HCT116 (cell line): ENCODE measurements at regions of chr22 and their contacts with region 1.

Region 1: DNA sequence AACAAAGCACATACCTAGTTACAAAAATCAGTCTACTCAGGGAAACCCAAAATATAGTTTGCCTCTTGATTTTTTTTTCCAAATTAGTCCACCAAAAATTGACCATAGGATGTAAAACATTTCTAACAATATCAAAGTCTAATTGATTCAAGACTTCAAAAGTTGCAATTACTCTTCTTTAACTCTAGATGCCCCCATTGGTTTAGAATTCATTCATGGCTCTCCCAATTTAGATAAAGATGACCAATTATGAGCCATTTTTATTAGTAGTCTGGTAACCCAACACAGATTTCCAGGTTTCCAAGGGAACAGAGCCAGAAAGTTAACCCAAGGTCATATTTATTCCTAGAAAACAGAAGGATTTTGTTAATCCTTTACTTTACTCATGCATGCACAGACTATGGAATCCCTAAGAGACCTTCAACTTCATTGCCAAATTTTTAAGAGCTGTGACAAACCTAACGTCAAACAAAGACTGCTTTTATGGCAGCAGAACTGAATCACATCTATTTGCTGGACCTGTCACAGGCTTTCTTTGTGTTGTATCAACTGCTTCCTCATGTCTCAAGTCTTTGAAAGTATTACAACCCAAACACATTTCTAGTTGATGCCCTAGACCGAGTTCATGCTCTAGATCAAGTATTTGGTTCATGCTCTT is 55.3 kb downstream of the C22orf42 start:
- DNase-seq: peak; percentile 15
- ATAC-seq: no peak
- H3K4me3 ChIP-seq: no peak overlapping the region
- H3K27ac ChIP-seq: no peak overlapping the region
- H3K4me1 ChIP-seq: no peaks in the 10 kb centered on the region
- H3K27me3 ChIP-seq: peaks cover 40% of the 10 kb centered on the region
- CTCF ChIP-seq: peak; percentile 5 to 56 (median 54); a peak in 4 of 6 replicates
- POLR2A ChIP-seq: no peak
- RAD21 ChIP-seq: peak; percentile 65

Region 2: GRCh38 chr22:32265882-32266767 is 162.3 kb after region 1 on chr22:
- CTCF ChIA-PET with region 1: interaction called, 10 read pairs
- POLR2A ChIA-PET with region 1: no interaction called
- RAD21 ChIA-PET with region 1: interaction called in 1 of 2 experiments, 3 read pairs
- intact Hi-C with region 1: loop called (anchors 2 kb)
- DNase-seq: peak; percentile 44
- ATAC-seq: peak; percentile 85
- H3K4me3 ChIP-seq: no peak overlapping the region
- H3K27ac ChIP-seq: peak overlapping the region; percentile 13; the same call in 1 of the 2 replicates
- H3K4me1 ChIP-seq: peaks cover 3 to 5% of the 10 kb centered on the region in 2 experiments; a peak in 2 of 4 replicates
- H3K27me3 ChIP-seq: no peaks in the 10 kb centered on the region
- CTCF ChIP-seq: peak; percentile 58 to 87 (median 84)
- POLR2A ChIP-seq: no peak
- RAD21 ChIP-seq: peak; percentile 50

Region 3: GRCh38 chr22:32331236-32331917 is 227.6 kb after region 1 on chr22:
- CTCF ChIA-PET with region 1: no interaction called
- POLR2A ChIA-PET with region 1: no interaction called
- RAD21 ChIA-PET with region 1: no interaction called
- intact Hi-C with region 1: no loop called
- DNase-seq: no peak
- ATAC-seq: no peak
- H3K4me3 ChIP-seq: no peak overlapping the region
- H3K27ac ChIP-seq: no peak overlapping the region
- H3K4me1 ChIP-seq: no peaks in the 10 kb centered on the region
- H3K27me3 ChIP-seq: no peaks in the 10 kb centered on the region
- CTCF ChIP-seq: no peak
- POLR2A ChIP-seq: no peak
- RAD21 ChIP-seq: no peak

Region 4: DNA sequence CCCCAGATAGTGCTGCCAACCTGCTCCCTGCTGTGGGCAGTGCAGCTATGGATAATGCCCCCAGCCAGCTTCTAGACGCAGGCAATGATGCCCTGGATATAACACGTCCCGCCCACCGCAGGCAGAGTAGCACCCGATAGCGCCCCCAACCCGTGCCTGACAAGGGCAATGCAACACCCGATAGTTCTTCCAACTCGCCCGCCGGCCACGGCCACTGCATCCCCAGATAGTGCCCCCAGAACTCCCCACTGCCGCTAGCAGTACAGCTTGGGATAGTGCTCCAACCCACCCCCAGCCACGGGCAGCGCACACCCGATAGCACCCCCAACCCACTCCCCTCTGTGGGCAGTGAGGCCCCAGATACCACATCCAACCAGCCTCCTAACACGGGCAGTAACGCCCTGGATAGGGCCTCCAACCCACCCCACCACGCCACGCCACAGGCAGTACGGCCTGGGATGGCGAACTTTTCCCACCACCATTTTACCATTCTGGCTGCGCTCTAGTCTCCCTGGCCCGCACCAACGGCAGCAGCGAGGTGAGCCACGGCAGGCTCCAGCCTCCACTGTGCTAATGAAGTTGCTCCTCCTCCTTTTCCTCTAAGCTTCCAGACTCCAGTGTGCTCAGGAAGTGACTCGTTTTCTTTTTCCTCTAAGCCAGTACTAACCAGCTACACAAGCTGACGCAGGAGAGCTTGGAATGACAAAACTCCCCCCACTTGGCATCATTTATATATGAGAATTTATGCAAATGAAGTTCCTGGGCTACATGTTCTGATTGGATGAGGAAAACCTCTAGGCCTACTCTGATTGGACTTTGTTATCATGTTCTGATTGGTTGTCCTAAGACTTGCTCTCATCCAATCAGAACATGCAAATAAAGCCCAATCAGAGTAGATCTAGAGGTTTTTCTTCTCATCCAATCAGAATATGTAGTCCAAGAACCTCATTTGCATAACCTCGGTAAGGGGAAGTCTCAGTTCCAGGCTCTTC is 250.9 kb after region 1 on chr22:
- CTCF ChIA-PET with region 1: no interaction called
- POLR2A ChIA-PET with region 1: no interaction called
- RAD21 ChIA-PET with region 1: no interaction called
- intact Hi-C with region 1: loop called (anchors 2 kb)
- DNase-seq: peak; percentile 49
- ATAC-seq: peak; percentile 46
- H3K4me3 ChIP-seq: peak overlapping the region; percentile 8 to 9; a peak in 1 of 4 replicates
- H3K27ac ChIP-seq: no peak overlapping the region
- H3K4me1 ChIP-seq: peaks cover 0 to 6% of the 10 kb centered on the region in 2 experiments; a peak in 1 of 4 replicates
- H3K27me3 ChIP-seq: no peaks in the 10 kb centered on the region
- CTCF ChIP-seq: no peak
- POLR2A ChIP-seq: no peak
- RAD21 ChIP-seq: no peak

Region 5: GRCh38 chr22:32378707-32379272 is 275.0 kb after region 1 on chr22:
- CTCF ChIA-PET with region 1: interaction called, 3 read pairs
- POLR2A ChIA-PET with region 1: no interaction called
- RAD21 ChIA-PET with region 1: no interaction called
- intact Hi-C with region 1: loop called (anchors 1 kb)
- DNase-seq: peak; percentile 54
- ATAC-seq: peak; percentile 99
- H3K4me3 ChIP-seq: no peak overlapping the region
- H3K27ac ChIP-seq: no peak overlapping the region
- H3K4me1 ChIP-seq: no peaks in the 10 kb centered on the region; a peak in 1 of 4 replicates
- H3K27me3 ChIP-seq: no peaks in the 10 kb centered on the region
- CTCF ChIP-seq: peak; percentile 98
- POLR2A ChIP-seq: no peak
- RAD21 ChIP-seq: peak; percentile 80

Region 6: GRCh38 chr22:32444068-32444467 is 340.3 kb after region 1 on chr22:
- CTCF ChIA-PET with region 1: no interaction called
- POLR2A ChIA-PET with region 1: no interaction called
- RAD21 ChIA-PET with region 1: no interaction called
- intact Hi-C with region 1: loop called (anchors 5 kb)
- DNase-seq: peak; percentile 34
- ATAC-seq: peak; percentile 98
- H3K4me3 ChIP-seq: no peak overlapping the region
- H3K27ac ChIP-seq: no peak overlapping the region
- H3K4me1 ChIP-seq: no peaks in the 10 kb centered on the region
- H3K27me3 ChIP-seq: no peaks in the 10 kb centered on the region; the same call in 1 of the 2 replicates
- CTCF ChIP-seq: peak; percentile 57 to 67 (median 62); a peak in 5 of 6 replicates
- POLR2A ChIP-seq: no peak
- RAD21 ChIP-seq: peak; percentile 67

Region 7: DNA sequence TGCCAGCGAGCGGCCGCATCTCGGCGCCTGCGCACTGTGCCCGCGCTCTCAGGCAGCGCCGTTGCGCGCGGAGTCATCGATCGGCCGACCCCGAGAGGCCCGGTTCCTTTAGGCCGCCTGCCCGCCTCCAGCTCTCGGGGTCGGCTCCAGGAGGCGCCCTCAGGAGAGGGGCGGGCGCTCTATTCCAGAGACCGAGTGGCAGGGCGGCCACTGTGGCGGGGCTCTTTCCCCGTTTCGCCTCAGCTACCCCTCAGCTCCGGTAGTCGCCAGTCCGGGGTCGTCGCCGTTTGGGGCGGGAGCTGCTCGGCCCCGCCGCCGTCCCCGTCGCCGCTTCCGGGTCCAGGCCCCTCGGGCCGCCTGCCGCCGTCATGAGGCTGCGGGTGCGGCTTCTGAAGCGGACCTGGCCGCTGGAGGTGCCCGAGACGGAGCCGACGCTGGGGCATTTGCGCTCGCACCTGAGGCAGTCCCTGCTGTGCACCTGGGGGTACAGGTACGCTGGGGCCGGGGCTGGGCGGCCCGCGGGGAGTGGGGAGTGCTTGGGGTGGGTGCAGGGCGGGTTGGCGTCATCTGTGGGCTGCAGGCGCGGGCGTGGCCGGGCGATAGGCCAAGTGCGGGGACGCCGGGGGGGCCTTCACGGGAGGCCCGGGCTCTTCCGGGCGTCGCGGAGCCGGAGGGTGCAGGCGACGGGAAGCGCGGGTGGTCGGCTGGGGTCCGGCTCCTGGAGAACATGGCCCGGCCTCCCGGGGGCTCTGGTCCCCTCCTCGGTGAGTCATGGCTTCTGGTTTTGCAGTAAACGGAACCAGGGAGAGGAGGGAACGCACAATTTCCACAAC is 371.1 kb after region 1 on chr22 and contains the start of gene FBXO7:
- CTCF ChIA-PET with region 1: no interaction called
- POLR2A ChIA-PET with region 1: no interaction called
- RAD21 ChIA-PET with region 1: no interaction called
- intact Hi-C with region 1: loop called (anchors 10 kb)
- DNase-seq: peak; percentile 80
- ATAC-seq: peak; percentile 83
- H3K4me3 ChIP-seq: peak within 1 kb of the TSS; percentile 69 to 79
- H3K27ac ChIP-seq: peak within 1 kb of the TSS; percentile 98
- H3K4me1 ChIP-seq: peaks cover 18 to 20% of the 10 kb centered on the region in 2 experiments
- H3K27me3 ChIP-seq: no peaks in the 10 kb centered on the region
- CTCF ChIP-seq: 0 out of 6 replicates have a peak, but pooled peaks of 1 of the 3 experiments have one; percentile 3
- POLR2A ChIP-seq: peak; percentile 74
- RAD21 ChIP-seq: no peak
- total RNA-seq, gene FBXO7: 69.2 TPM